ENCODE measurements at regions of chr20 and their contacts with region 1.

Region 1: DNA sequence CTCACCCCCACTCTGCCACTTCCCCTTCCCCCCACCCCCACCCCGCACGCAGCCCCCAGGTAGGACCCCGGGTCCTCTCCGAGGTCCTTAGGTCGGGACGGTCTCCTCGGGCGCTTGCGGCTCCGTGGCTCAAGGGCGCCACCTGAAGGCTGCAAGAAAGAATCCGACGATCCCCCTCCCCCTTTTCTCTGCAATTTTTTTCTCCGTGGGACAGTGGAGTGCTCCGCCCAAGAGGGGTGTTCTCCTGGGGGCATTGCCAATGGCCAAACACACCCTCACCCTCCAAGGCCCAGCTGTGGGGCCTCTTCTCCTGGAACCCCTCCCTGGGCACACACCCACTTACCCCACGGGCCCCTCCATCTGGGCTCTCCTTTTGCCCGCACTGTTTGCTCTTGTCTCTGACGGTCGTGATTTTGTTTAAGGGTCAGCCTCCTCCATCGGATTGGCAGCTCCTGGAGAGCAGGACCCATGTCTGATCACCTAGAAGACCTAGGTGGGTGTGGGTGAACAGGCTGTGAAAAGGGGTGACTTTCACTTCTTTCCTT is 1.1 kb upstream of the TMEM74B start:
- DNase-seq: peak; percentile 21

Region 2: GRCh38 chr20:986733-987355 is 199.0 kb before region 1 on chr20:
- in situ Hi-C with region 1: loop called (anchors 10 kb)
- DNase-seq: no peak

Region 3: GRCh38 chr20:1015181-1015580 is 170.7 kb before region 1 on chr20:
- in situ Hi-C with region 1: no loop called
- DNase-seq: no peak

Region 4: GRCh38 chr20:1118336-1119127 is 67.3 kb before region 1 on chr20 and contains the start of gene PSMF1:
- in situ Hi-C with region 1: no loop called
- DNase-seq: peak; percentile 91
- total RNA-seq, gene PSMF1: 84.9 and 95.9 TPM in 2 replicates

Region 5: GRCh38 chr20:1281279-1282057 is 95.6 kb after region 1 on chr20:
- in situ Hi-C with region 1: no loop called
- DNase-seq: no peak

Measured in G401 (cell line).